ENCODE measurements at regions of chr10 and their contacts with region 1.

Region 1: DNA sequence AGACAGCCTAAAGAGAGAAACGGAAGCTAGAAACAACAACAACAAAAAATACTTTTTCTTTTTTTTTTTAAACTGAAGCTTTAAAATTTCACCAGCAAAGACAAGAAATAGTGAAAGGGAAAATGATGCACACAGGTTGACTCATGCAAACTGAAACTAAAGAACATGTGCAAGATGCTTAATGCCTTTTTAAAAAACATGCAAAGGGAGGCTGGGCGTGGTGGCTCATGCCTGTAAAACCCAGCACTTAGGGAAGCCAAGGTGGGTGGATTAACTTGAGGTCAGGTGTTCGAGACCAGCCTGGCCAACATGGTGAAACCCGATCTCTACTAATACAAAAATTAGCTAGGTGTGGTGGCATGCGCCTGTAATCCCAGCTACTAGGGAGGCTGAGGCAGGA is 15.1 kb upstream of the CUBN start:
- DNase-seq: peak; percentile 85
- H3K4me3 Mint-ChIP-seq: no peak overlapping the region
- H3K27ac Mint-ChIP-seq: peak overlapping the region; percentile 61
- H3K4me1 Mint-ChIP-seq: peaks cover 23% of the 10 kb centered on the region
- H3K27me3 Mint-ChIP-seq: peaks cover 5% of the 10 kb centered on the region

Region 2: GRCh38 chr10:16950656-16951601 is 193.8 kb before region 1 on chr10:
- intact Hi-C with region 1: no loop called
- DNase-seq: no peak
- H3K4me3 Mint-ChIP-seq: no peak overlapping the region
- H3K27ac Mint-ChIP-seq: no peak overlapping the region
- H3K4me1 Mint-ChIP-seq: peaks cover 7% of the 10 kb centered on the region
- H3K27me3 Mint-ChIP-seq: peaks cover 10% of the 10 kb centered on the region

Region 3: DNA sequence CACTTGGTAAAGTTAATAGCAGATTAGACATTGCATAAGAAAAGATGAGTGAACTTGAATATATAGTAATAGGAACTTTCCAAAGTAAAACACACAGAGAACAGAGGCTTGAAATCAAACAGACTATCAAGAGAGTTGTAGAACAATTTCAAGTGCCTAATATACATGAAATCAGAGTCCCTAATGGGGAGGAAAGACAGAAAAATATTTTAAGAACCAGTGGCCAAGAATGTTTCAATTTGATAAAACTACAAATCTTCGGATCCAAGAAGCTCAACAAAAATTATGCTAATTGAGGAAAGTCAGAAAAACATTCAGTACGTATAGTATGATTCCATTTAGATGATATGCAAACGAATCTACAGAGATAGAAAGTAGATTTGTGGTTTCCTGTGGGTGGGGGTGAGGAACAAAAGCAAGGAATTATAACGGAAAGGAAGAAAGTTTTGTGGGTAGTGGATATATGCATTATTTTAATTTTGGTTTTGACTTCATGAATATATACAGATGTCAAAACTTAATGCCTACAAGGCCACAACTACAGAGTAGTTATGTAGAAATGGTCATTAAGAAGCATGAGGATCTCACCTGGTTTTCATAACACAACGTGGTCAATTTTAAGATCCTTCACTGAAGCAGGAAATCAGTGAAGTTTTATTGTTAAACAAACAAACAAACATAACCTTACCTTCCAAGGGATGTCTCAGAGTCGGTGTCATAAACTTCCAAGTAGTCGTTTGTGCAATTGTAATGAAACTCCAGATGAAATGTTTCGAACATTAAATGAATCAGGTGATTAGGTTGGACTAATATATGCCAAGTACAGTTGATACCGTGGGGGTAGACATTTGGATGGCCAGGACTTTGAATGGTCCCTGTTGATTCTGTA is 77.1 kb before region 1 on chr10:
- intact Hi-C with region 1: loop called (anchors 5 kb)
- DNase-seq: no peak
- H3K4me3 Mint-ChIP-seq: peak overlapping the region; percentile 1
- H3K27ac Mint-ChIP-seq: no peak overlapping the region
- H3K4me1 Mint-ChIP-seq: peaks cover 15% of the 10 kb centered on the region
- H3K27me3 Mint-ChIP-seq: peaks cover 7% of the 10 kb centered on the region